AG04450 (cell line): ENCODE measurements at regions of chr1 and their contacts with region 1.

Region 1: DNA sequence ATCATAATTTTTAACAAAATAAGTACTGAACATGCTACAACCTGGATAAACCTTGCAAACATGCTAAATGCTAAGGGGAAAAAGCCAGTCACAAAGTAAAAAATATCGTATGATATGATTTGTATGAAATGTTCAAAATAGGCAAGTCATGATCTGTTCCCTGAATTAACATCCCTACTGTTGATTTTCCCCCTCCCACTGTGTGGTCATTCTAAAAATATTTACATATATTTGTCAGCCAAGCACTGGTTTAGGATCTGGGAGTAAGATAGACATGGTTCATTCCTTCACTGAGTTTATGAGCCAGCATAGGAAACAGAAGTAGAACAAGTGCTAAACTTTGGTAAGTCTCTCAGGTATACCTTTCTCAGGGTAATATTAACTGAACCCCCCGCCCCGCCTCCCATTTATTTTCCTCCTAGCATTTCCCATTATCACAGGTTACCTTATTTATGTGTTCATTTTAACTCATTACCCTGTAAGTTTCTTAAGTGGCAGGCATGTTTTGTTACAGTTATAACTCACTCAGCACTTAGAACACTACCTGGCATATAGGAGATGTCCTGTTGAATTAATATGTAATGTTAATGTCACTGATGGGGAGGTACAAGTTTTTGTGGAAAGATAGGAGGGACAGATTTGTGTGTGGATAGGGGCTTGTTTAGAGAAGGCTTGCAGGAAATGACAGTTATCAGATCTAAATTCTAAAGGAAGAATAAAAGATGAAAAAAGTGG is 12.3 kb downstream of the UQCRH start:
- DNase-seq: no peak
- H3K4me3 ChIP-seq: no peak overlapping the region
- H3K27ac ChIP-seq: no peak overlapping the region
- H3K27me3 ChIP-seq: no peaks in the 10 kb centered on the region
- CTCF ChIP-seq: no peak

Region 2: DNA sequence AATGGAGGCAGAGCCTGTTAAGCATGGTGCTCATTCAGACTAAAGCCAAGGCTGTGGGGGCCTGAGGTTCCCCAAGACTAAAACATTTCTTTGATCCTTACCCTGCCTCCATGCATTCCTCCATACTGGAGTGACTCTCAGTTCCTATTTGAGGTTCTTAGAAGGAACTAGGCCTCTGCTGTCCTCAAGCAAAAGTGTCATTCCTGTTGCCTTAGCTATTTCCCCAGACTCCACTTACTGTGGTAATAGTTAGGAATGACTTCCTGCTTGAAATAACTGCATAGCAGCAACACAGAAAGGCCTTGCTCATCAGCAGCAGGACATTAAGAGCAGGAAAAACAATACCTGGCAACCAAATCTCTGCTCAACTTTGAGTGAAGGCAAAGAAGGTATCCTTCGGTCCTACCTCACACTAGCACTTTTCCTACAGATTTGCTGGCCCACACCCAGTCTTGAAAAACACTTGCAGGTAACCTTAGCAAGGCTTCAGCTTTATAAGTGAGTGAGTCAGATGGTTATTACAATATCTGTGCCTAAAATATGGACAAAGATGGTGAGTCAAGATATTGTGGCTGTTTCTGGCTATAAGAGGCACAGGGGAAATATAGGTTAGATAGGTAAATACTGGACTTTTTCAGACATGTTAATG is 27.2 kb before region 1 on chr1:
- CTCF ChIA-PET with region 1: no interaction called
- POLR2A ChIA-PET with region 1: no interaction called
- DNase-seq: no peak
- H3K4me3 ChIP-seq: no peak overlapping the region
- H3K27ac ChIP-seq: peak overlapping the region; percentile 62
- H3K27me3 ChIP-seq: no peaks in the 10 kb centered on the region
- CTCF ChIP-seq: no peak

Region 3: GRCh38 chr1:46333300-46334029 is 17.6 kb after region 1 on chr1:
- CTCF ChIA-PET with region 1: interaction called, 10 read pairs
- POLR2A ChIA-PET with region 1: no interaction called
- DNase-seq: no peak
- H3K4me3 ChIP-seq: no peak overlapping the region
- H3K27ac ChIP-seq: no peak overlapping the region
- H3K27me3 ChIP-seq: no peaks in the 10 kb centered on the region
- CTCF ChIP-seq: peak; percentile 41

Region 4: GRCh38 chr1:46379996-46380395 is 64.2 kb after region 1 on chr1:
- CTCF ChIA-PET with region 1: no interaction called
- POLR2A ChIA-PET with region 1: no interaction called
- DNase-seq: no peak
- H3K4me3 ChIP-seq: no peak overlapping the region
- H3K27ac ChIP-seq: no peak overlapping the region
- H3K27me3 ChIP-seq: no peaks in the 10 kb centered on the region
- CTCF ChIP-seq: no peak

Region 5: GRCh38 chr1:46406881-46407608 is 91.2 kb after region 1 on chr1:
- CTCF ChIA-PET with region 1: interaction called, 13 read pairs
- POLR2A ChIA-PET with region 1: no interaction called
- DNase-seq: no peak
- H3K4me3 ChIP-seq: 0 out of 2 replicates have a peak overlapping the region, but pooled peaks have one; percentile 17
- H3K27ac ChIP-seq: no peak overlapping the region
- H3K27me3 ChIP-seq: peaks cover 16% of the 10 kb centered on the region
- CTCF ChIP-seq: no peak